HCT116 (cell line): ENCODE measurements at regions of chr16 and their contacts with region 1.

Region 1: GRCh38 chr16:70345840-70346239 is 863 bp upstream of the DDX19A start:
- DNase-seq: no peak
- ATAC-seq: no peak
- H3K4me3 ChIP-seq: peak overlapping the region; percentile 72 to 94
- H3K27ac ChIP-seq: peak overlapping the region; percentile 81
- H3K4me1 ChIP-seq: peaks cover 8 to 15% of the 10 kb centered on the region in 2 experiments
- H3K27me3 ChIP-seq: no peaks in the 10 kb centered on the region
- CTCF ChIP-seq: no peak
- POLR2A ChIP-seq: no peak
- RAD21 ChIP-seq: no peak

Region 2: GRCh38 chr16:69937465-69937951 is 408.3 kb before region 1 on chr16:
- CTCF ChIA-PET with region 1: no interaction called
- POLR2A ChIA-PET with region 1: no interaction called
- RAD21 ChIA-PET with region 1: no interaction called
- intact Hi-C with region 1: no loop called
- DNase-seq: no peak
- ATAC-seq: no peak
- H3K4me3 ChIP-seq: no peak overlapping the region
- H3K27ac ChIP-seq: no peak overlapping the region
- H3K4me1 ChIP-seq: no peaks in the 10 kb centered on the region
- H3K27me3 ChIP-seq: no peaks in the 10 kb centered on the region
- CTCF ChIP-seq: no peak
- POLR2A ChIP-seq: no peak
- RAD21 ChIP-seq: no peak

Region 3: DNA sequence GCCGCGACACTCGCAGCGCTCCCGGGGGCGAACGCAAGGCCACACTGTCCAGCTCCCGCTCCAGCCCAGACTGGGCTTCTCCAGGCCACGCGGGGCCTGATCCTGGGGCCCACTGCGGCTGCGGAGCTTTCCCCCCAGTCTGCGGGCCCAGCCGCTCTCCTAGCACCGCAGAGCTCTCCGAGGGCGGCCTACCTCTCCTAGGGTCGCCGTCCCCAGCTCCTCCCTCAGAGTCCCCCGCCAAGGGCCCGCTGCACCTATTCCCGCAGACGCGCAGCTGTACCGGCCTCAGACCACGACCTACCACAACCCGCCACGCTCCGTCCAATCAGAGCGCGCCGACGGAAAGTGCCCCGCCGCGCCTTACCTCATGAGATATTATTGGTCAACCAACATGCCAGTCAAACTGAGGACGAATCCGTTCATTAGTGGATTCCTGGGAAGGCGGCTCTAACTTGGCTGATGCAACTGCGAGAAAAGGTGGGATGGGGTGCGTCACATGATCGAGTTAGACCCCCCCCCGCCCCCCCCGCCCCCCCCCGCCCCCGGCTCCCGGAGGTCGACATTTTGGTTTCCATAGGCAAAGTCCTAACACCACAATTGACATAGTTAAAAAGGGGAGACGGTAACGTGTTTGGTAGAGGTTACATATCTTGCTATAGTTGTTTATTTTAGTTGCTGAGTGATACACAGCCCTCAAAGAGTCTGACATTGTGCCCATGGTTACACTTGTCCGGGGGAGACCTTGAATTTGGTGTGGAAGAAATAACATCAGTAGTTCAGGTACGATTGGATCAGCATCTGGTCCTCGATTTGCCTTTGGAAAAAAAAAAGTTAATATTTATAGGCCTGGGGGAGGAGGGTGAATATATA is 56.4 kb before region 1 on chr16 and contains the start of gene AARS1:
- CTCF ChIA-PET with region 1: no interaction called
- POLR2A ChIA-PET with region 1: interaction called, 4 read pairs
- RAD21 ChIA-PET with region 1: no interaction called
- intact Hi-C with region 1: loop called (anchors 2 kb)
- DNase-seq: peak; percentile 100
- ATAC-seq: peak; percentile 98
- H3K4me3 ChIP-seq: peak within 1 kb of the TSS; percentile 84 to 98
- H3K27ac ChIP-seq: peak within 1 kb of the TSS; percentile 78
- H3K4me1 ChIP-seq: peaks cover 11 to 14% of the 10 kb centered on the region in 2 experiments
- H3K27me3 ChIP-seq: no peaks in the 10 kb centered on the region
- CTCF ChIP-seq: no peak
- POLR2A ChIP-seq: peak; percentile 83
- RAD21 ChIP-seq: no peak
- total RNA-seq, gene AARS1: 215 TPM